Left ventricle myocardium inferior (tissue), 1 donor: ENCODE measurements at regions of chr3 and their contacts with region 1.

Region 1: DNA sequence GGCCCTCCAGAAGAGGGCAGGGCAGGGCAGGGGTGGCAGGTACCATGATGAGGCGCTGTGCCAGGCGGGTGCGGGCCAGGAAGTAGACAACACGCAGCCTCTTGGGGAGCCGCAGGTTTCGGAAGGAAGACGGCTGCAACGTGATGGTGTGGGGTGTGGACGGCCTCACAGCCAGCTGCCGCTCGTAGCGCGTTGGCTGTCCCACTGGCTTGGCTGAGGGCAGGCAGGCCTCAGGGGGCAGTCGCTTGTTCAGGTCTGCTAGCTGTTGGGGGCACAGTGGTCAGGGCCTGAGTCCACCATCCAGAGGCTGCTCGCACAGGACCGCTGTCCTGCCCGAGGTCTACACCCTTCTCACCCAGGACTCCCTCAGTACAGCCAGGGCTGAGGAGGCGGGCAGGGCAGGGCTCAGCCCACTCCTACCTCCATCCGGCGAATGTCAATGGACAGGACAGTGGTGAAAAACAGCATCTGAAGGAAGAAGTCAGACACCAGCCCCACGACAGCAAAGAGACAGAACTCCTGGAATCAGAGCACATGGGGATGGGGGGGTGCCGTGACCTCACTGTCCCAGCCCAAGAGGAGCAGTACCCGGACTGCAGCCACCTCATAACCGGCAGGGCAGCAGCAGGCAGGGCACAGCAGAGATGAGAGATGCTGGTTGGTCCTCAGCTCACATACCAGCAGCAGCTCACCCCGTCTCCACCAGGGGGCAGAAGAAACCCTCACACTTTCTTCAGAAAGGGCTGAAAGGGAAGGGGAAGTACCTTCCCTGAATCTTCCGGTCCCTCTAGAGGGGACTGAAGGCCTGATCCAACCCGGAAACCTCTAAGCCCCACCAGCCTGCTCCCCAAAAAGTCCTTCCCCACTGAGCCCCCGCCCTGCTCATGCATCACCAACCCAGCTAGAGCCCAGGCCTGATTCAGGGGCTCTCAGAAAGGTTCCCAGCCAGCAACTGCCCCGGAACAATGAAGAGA is 40.0 kb downstream of the PTPN23 start:
- DNase-seq: peak; percentile 85
- H3K4me3 ChIP-seq: peak overlapping the region; percentile 6
- H3K27ac ChIP-seq: peak overlapping the region; percentile 84
- H3K4me1 ChIP-seq: peaks cover 25% of the 10 kb centered on the region
- H3K27me3 ChIP-seq: no peaks in the 10 kb centered on the region
- CTCF ChIP-seq: peak; percentile 92

Region 2: GRCh38 chr3:47469616-47470015 is 48.8 kb after region 1 on chr3:
- intact Hi-C with region 1: loop called (anchors 5 kb)
- DNase-seq: no peak
- H3K4me3 ChIP-seq: no peak overlapping the region
- H3K27ac ChIP-seq: no peak overlapping the region
- H3K4me1 ChIP-seq: peaks cover 21% of the 10 kb centered on the region
- H3K27me3 ChIP-seq: no peaks in the 10 kb centered on the region
- CTCF ChIP-seq: no peak

Region 3: DNA sequence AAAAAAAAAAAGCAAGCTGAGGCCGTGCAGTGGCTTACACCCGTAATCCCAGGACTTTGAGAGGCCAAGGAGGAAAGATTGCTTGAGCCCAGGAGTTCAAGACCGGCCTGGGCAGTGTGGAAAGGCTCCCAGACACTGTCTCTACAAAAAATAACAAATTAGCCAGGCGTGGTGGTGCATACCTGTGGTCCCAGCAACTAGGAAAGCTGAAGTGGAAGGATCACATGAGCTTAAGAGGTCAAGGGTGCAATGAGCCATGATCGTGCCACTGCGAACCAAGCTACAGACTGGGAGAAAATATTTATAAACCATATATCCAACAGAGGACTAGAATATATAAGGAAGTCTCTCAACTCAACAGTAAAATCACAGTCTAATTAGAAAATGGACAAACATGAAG is 1760.6 kb after region 1 on chr3:
- intact Hi-C with region 1: no loop called
- DNase-seq: no peak
- H3K4me3 ChIP-seq: no peak overlapping the region
- H3K27ac ChIP-seq: no peak overlapping the region
- H3K4me1 ChIP-seq: peaks cover 30% of the 10 kb centered on the region
- H3K27me3 ChIP-seq: no peaks in the 10 kb centered on the region
- CTCF ChIP-seq: no peak